B cell (primary cell): ENCODE measurements at regions of chr4 and their contacts with region 1.

Region 1: GRCh38 chr4:17968721-17969120 is 52.8 kb downstream of the LCORL start:
- DNase-seq: no peak
- ATAC-seq: no peak
- H3K4me3 ChIP-seq: no peak overlapping the region
- H3K4me3 Mint-ChIP-seq: no peak overlapping the region
- H3K27ac ChIP-seq: no peak overlapping the region
- H3K27ac Mint-ChIP-seq: no peak overlapping the region
- H3K4me1 ChIP-seq: no peaks in the 10 kb centered on the region
- H3K4me1 Mint-ChIP-seq: peaks cover 3% of the 10 kb centered on the region
- H3K27me3 ChIP-seq: no peaks in the 10 kb centered on the region
- H3K27me3 Mint-ChIP-seq: no peaks in the 10 kb centered on the region
- CTCF ChIP-seq: no peak

Region 2: GRCh38 chr4:18007625-18008024 is 38.9 kb after region 1 on chr4:
- CTCF ChIA-PET with region 1: no interaction called
- POLR2A ChIA-PET with region 1: no interaction called
- intact Hi-C with region 1: loop called (anchors 5 kb)
- DNase-seq: no peak
- ATAC-seq: no peak
- H3K4me3 ChIP-seq: no peak overlapping the region
- H3K4me3 Mint-ChIP-seq: no peak overlapping the region
- H3K27ac ChIP-seq: no peak overlapping the region
- H3K27ac Mint-ChIP-seq: no peak overlapping the region
- H3K4me1 ChIP-seq: peaks cover 0 to 8% of the 10 kb centered on the region in 2 donors
- H3K4me1 Mint-ChIP-seq: peaks cover 46% of the 10 kb centered on the region
- H3K27me3 ChIP-seq: no peaks in the 10 kb centered on the region
- H3K27me3 Mint-ChIP-seq: no peaks in the 10 kb centered on the region
- CTCF ChIP-seq: no peak

Region 3: DNA sequence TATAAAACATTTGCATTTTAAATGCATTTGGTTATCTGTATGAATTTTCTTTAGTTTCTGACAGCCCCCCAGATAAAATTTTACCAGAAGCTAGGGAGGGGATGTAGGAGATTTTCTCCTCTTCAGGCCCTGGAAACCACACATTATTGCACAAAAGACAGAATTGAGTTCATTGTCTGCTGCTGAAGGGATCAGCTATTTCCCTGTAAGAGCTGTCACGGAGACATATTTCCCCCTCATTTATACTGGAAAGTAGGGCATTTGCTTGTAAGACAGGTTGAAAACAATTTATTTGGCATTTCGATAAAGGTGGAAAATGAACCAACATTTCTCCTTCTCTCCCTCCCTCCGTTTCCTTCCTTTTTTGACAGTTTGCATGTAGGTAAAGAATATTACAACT is 294.1 kb after region 1 on chr4:
- CTCF ChIA-PET with region 1: no interaction called
- POLR2A ChIA-PET with region 1: no interaction called
- intact Hi-C with region 1: no loop called
- DNase-seq: no peak
- ATAC-seq: no peak
- H3K4me3 ChIP-seq: no peak overlapping the region
- H3K4me3 Mint-ChIP-seq: no peak overlapping the region
- H3K27ac ChIP-seq: no peak overlapping the region
- H3K27ac Mint-ChIP-seq: no peak overlapping the region
- H3K4me1 ChIP-seq: no peaks in the 10 kb centered on the region
- H3K4me1 Mint-ChIP-seq: no peaks in the 10 kb centered on the region
- H3K27me3 ChIP-seq: no peaks in the 10 kb centered on the region
- H3K27me3 Mint-ChIP-seq: no peaks in the 10 kb centered on the region
- CTCF ChIP-seq: no peak